Cardiac septum (tissue), 1 donor: ENCODE measurements at regions of chr2 and their contacts with region 1.

Region 1: DNA sequence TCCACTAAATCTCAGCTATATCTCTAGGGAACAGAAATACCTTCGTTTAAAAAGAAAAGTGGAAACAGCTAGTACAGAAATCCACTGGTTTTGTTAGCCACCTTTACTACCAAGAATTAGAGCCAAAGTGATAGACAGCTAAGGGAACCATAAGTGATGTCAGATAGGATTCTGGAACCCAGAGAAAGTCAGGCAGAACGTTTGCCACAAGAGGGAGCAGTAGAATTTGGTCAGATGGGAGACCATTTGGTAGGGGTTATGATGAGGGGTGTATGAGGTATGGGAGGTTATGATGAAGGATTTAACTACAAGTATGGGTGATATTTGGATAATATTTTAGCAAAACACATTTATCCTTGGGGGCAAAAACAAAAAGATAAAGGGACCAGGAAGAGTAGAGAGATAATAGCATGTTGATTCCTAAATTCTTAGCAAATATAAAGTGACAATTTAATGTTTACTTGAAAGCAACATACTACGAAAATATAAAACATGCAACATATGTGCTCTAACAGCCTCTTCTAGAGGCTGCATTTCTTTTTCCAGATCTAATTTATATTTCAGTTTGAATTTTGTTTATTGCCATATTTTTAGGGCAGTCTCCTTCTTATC is 3.3 kb downstream of the SLC8A1 start:
- DNase-seq: no peak

Region 2: DNA sequence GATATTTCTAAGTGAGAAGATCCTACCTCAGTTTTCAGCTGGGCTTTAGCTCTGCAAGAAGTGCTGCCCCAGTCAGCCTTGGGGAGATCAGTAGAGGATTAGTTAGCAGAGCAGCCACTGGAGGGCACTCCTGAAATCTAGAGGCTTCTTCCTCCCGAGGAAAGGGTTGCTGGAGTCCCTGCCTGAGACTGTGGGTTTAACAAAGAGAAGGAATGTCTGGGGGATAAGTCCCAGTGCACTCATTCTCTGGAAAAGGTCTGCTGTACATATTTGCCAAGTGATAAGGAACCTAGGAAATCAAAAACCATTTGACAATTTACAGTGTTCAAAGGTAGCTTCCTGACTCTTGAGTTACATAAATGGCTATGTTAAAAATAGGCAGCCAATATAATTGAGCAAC is 203.9 kb before region 1 on chr2:
- intact Hi-C with region 1: loop called (anchors 5 kb)
- DNase-seq: peak; percentile 79

Region 3: DNA sequence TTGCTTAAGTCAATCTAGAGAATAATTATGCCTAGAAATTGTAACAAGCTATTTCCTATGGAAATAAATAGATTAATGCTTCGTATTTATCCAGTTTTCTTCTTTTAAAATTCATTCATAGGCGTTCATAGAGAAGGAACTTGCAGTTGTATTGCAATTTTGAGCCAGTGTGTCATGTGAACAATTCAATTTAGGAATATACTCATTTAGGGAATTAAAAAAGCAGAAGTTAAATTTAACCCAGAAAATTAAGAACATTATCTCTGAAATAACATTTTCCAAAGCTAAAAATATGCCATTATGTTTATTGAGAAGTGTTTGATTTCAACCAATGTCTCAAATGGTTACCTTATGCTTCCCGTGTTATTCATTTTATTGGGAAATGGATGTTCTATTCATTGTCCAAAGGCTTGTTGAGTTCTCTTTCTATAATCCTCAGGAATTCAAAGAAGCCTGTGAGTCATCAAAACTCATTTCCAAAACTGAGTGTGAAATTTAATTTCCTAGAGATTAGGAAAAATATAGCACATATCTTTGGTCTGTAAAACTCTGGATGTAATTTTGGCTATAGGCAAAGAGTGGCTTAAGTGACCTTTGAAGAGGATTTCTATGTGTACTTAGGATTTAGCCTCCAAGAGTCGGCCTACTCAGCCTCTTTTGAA is 96.4 kb before region 1 on chr2:
- intact Hi-C with region 1: loop called (anchors 5 kb)
- DNase-seq: no peak

Region 4: GRCh38 chr2:40488101-40488601 is 39.6 kb after region 1 on chr2:
- intact Hi-C with region 1: loop called (anchors 5 kb)
- DNase-seq: no peak

Region 5: DNA sequence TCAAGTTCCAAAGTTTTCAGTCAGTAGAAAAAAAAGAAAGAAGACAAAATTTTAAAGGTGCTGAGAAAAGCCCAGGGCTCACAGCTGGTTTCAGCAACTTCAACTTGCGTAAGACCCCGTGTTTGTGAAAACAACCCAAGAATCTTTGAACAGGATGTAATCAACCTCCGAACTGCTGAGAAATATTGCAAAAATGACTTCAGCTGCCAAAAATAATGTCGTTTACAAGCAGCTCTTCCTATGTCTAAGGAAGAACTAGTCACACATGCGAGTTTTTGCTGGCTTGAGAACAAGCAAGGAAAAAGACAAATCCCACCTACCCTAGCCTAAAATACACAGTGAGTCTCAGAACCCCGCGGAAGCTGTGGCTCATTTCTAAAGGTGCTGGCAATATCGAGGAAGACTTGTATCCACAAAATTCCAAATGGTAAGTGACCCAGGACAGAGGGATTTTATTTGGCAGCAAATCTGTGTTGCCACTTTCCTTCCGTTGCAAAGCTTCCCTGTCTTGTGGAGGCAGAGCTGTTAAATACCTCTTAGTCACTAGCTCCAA is 63.2 kb after region 1 on chr2:
- intact Hi-C with region 1: loop called (anchors 1 kb)
- DNase-seq: peak; percentile 74

Region 6: DNA sequence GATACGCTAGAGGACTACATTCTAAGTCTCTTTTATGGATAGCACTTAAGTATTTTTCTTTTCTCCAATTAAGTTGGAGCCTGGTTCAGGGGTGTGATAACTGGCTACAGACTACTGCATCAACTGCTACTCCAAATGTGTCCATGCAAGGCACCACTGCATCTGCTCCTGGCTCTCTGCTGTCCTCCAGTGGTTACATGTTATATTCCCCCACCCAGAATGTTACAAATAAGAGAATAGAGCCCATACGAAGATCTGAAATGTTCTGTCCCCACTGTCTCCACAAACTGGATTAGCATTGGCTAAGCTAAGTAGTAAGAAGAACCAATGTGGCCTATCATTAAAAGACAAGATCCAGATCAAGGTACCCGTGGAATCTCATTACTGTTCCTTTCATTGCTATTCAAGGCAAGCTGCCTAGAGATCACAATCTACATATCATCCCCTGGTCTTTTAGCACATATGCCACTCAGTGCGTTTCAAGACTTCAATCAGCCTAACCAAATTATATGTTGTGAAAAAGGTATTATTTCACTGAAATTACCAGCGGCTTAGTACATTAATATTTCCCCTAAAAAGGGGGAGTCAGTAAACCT is 311.6 kb after region 1 on chr2:
- intact Hi-C with region 1: loop called (anchors 5 kb)
- DNase-seq: no peak